Psoas muscle (tissue), 8 donors: ENCODE measurements at regions of chr10 and their contacts with region 1.

Region 1: GRCh38 chr10:102434394-102435132 is 2.2 kb upstream of the CUEDC2 start:
- DNase-seq: no peak
- ATAC-seq: no peak
- H3K4me3 ChIP-seq: no peak overlapping the region
- H3K27ac ChIP-seq: no peak overlapping the region
- H3K4me1 ChIP-seq: peaks cover 7% of the 10 kb centered on the region
- H3K27me3 ChIP-seq: peaks cover 0 to 16% (median 3%) of the 10 kb centered on the region in 3 donors
- CTCF ChIP-seq: no peak

Region 2: DNA sequence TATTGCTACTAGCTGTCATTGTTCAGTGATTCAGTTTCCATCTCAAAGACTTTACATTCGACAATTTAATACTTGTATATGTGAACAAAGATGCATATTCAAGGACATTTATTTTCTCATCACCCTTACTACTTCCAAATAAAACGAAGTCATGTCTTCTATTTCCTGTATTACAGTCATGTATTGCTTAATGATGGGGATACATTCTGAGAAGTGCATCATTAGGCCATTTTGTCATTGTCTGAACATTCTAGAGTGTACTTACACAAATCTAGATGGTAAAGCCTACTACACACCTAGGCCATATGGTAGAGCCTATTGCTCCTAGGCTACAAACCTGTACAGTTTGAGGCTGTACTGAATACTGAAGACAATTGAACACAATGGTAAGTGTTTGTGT is 10.3 kb after region 1 on chr10:
- intact Hi-C with region 1: loop called in 1 of 2 experiments (anchors 1 kb)
- DNase-seq: no peak
- ATAC-seq: no peak
- H3K4me3 ChIP-seq: no peak overlapping the region
- H3K27ac ChIP-seq: no peak overlapping the region
- H3K4me1 ChIP-seq: peaks cover under 1% of the 10 kb centered on the region
- H3K27me3 ChIP-seq: no peaks in the 10 kb centered on the region
- CTCF ChIP-seq: no peak